Naive thymus-derived CD4-positive, alpha-beta T cell (primary cell): ENCODE measurements at regions of chr1 and their contacts with region 1.

Region 1: DNA sequence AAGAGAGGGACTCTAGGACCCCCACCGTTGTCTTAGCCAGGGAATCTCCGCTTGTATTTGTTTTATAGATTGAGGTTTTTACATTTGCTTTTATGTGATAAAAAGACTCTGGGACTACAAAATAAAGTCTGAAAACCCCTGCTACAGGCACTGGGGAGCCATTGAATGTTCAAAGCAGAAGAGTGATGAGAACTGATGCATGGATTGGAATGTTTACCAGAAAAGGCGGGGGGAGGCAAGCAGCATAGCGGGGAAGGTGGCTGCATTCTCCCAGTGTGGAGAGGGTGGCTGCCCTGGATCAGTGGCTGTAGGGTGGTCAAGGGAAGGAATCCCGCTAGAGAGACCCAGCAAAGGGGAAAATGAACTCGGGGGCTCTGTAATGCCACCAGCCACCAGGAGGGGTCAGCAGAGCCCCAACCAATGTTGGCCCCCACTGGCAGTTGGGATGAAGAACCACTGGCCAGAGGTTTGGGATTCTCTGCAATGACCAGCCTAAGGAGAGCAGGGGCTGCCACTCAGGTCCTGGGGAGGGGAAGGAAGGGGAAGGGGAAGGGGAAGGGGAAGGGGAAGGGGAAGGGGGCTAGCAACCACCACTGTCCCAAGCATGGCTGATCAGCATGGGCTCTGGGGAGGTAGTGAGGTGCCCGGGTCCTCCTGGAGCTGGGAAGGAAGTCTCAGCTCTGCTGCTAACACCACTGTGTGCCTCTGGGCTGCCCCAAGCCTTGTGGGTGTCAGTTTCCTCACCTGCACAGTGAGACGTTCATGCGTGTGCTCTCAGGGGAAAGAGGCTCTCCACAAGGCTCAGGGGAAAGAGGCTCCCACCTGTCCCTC is 19.2 kb upstream of the PEF1 start:
- DNase-seq: peak; percentile 16 to 66 (median 48)
- ATAC-seq: peak; percentile 73
- H3K4me3 ChIP-seq: no peak overlapping the region
- H3K4me3 Mint-ChIP-seq: no peak overlapping the region
- H3K27ac ChIP-seq: no peak overlapping the region
- H3K27ac Mint-ChIP-seq: peak overlapping the region in 1 of 9 donors; percentile 41
- H3K4me1 ChIP-seq: no peaks in the 10 kb centered on the region
- H3K4me1 Mint-ChIP-seq: peaks cover 0 to 2% (median under 1%) of the 10 kb centered on the region in 7 donors
- H3K27me3 ChIP-seq: no peaks in the 10 kb centered on the region
- H3K27me3 Mint-ChIP-seq: peaks cover under 1 to 9% (median 5%) of the 10 kb centered on the region in 5 donors

Region 2: DNA sequence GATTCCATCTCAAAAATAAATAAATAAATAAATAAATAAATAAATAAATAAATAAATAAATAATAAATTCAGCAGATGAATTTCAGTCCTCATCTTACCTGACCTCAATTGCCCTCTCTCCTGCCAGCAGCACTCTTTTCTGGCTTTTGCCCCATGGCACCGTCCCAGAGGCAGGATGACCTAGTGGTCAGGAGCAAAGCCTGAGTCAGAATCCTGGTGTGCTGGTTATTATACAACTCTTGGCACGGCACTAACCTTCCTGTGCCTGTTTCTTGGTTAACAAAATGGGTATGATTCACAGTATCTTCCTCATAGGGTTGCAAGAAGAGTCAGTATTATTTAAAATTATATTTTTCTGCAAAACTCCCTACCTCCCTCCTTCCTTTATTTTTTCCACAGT is 467.2 kb before region 1 on chr1:
- CTCF ChIA-PET with region 1: no interaction called
- POLR2A ChIA-PET with region 1: no interaction called
- intact Hi-C with region 1: no loop called
- DNase-seq: no peak
- ATAC-seq: no peak
- H3K4me3 ChIP-seq: no peak overlapping the region
- H3K4me3 Mint-ChIP-seq: no peak overlapping the region
- H3K27ac ChIP-seq: no peak overlapping the region
- H3K27ac Mint-ChIP-seq: no peak overlapping the region
- H3K4me1 ChIP-seq: no peaks in the 10 kb centered on the region
- H3K4me1 Mint-ChIP-seq: no peaks in the 10 kb centered on the region
- H3K27me3 ChIP-seq: no peaks in the 10 kb centered on the region
- H3K27me3 Mint-ChIP-seq: peaks cover 0 to 13% (median 0%) of the 10 kb centered on the region in 5 donors

Region 3: GRCh38 chr1:31705080-31705866 is 41.4 kb after region 1 on chr1:
- CTCF ChIA-PET with region 1: interaction called, 4 read pairs
- POLR2A ChIA-PET with region 1: no interaction called
- intact Hi-C with region 1: loop called in 1 of 2 experiments (anchors 5 kb)
- DNase-seq: peak in 3 of 9 donors; percentile 13 to 80 (median 21)
- ATAC-seq: peak; percentile 70
- H3K4me3 ChIP-seq: no peak overlapping the region
- H3K4me3 Mint-ChIP-seq: peak overlapping the region in 6 of 10 donors; percentile 30 to 69 (median 57)
- H3K27ac ChIP-seq: no peak overlapping the region
- H3K27ac Mint-ChIP-seq: peak overlapping the region in 2 of 9 donors; percentile 58 to 67
- H3K4me1 ChIP-seq: peaks cover 8 to 12% of the 10 kb centered on the region in 2 donors
- H3K4me1 Mint-ChIP-seq: peaks cover 14 to 42% (median 28%) of the 10 kb centered on the region in 7 donors
- H3K27me3 ChIP-seq: peaks cover 0 to 12% of the 10 kb centered on the region in 2 donors
- H3K27me3 Mint-ChIP-seq: peaks cover 42 to 62% (median 45%) of the 10 kb centered on the region in 5 donors

Region 4: DNA sequence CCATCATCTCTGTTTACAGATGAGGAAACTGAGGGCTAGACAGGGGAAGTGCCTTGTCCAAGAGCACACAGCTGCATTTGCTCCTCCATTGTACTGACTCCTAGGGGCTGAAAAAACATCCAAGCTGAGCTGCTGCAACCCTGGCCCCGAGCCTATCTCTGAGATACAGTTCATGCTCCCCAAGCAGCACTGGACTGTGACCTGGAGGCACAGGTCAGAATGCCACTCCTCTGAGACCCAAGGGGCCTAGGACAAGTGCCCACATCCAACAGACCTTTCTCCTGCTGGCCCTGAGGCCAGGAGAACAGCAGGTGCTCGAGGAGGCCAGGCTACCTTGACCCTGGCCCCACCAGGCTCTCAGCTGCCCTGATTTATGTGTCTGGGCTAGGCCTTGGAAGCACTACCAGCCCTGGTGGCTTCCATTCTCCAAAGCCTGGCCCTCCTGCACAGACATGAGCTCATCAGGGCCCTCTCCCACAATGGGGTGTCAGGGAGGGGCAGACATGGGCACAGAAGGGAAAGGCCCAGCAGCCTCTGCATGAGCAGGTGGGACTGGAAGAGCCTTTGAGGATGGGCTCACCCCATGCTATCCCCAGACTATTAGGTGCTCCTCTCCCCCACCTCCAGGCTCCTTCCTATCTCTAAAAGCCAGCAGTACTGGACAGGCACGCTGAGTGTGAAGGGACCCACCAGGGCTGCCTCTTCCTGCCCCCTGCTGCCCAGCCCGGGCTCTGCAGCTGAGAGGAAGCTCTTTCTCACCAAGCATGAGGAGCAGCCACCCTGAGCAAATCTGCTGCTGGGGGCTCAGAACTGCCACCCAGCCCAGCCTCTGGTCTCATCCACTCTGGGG is 81.5 kb after region 1 on chr1:
- CTCF ChIA-PET with region 1: interaction called, 3 read pairs
- POLR2A ChIA-PET with region 1: no interaction called
- intact Hi-C with region 1: loop called in 1 of 2 experiments (anchors 1 kb)
- DNase-seq: peak in 2 of 9 donors; percentile 30 to 65
- ATAC-seq: peak; percentile 71
- H3K4me3 ChIP-seq: no peak overlapping the region
- H3K4me3 Mint-ChIP-seq: no peak overlapping the region
- H3K27ac ChIP-seq: no peak overlapping the region
- H3K27ac Mint-ChIP-seq: no peak overlapping the region
- H3K4me1 ChIP-seq: peaks cover 0 to 18% of the 10 kb centered on the region in 2 donors
- H3K4me1 Mint-ChIP-seq: peaks cover 0 to 21% (median 8%) of the 10 kb centered on the region in 7 donors
- H3K27me3 ChIP-seq: no peaks in the 10 kb centered on the region
- H3K27me3 Mint-ChIP-seq: peaks cover 0 to 15% (median 6%) of the 10 kb centered on the region in 5 donors

Region 5: GRCh38 chr1:31955917-31956736 is 292.3 kb after region 1 on chr1:
- CTCF ChIA-PET with region 1: no interaction called
- POLR2A ChIA-PET with region 1: no interaction called
- intact Hi-C with region 1: loop called in 1 of 2 experiments (anchors 5 kb)
- DNase-seq: peak in 7 of 9 donors; percentile 31 to 79 (median 51)
- ATAC-seq: peak; percentile 93
- H3K4me3 ChIP-seq: no peak overlapping the region
- H3K4me3 Mint-ChIP-seq: peak overlapping the region; percentile 10 to 79 (median 59)
- H3K27ac ChIP-seq: peak overlapping the region; percentile 8
- H3K27ac Mint-ChIP-seq: peak overlapping the region; percentile 15 to 91 (median 83)
- H3K4me1 ChIP-seq: peaks cover 31 to 42% of the 10 kb centered on the region in 2 donors
- H3K4me1 Mint-ChIP-seq: peaks cover 45 to 76% (median 73%) of the 10 kb centered on the region in 7 donors
- H3K27me3 ChIP-seq: no peaks in the 10 kb centered on the region
- H3K27me3 Mint-ChIP-seq: no peaks in the 10 kb centered on the region

Region 6: DNA sequence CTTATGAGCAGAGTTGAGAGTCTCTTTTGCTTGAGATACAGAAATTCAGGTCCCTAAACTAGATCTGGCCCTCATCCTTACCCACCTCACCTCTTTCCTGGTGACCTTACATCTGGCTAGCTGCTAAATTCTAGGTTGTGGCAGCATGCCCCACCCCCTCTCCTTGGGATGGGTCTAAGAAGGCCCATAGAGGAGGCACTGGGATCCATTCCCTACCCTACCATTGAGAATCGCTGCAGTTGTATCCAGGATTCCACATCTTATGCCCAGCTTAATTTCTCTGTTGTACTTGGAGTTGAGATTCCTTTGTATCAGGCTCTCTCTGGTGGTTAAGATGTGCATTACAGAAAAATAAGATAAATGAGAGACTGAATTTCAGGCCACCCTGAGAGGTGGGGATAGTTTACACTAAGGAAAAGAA is 399.4 kb after region 1 on chr1:
- CTCF ChIA-PET with region 1: interaction called, 3 read pairs
- POLR2A ChIA-PET with region 1: no interaction called
- intact Hi-C with region 1: loop called (anchors 1 to 5 kb)
- DNase-seq: peak in 6 of 9 donors; percentile 12 to 46 (median 35)
- ATAC-seq: peak; percentile 60
- H3K4me3 ChIP-seq: no peak overlapping the region
- H3K4me3 Mint-ChIP-seq: no peak overlapping the region
- H3K27ac ChIP-seq: no peak overlapping the region
- H3K27ac Mint-ChIP-seq: peak overlapping the region in 8 of 9 donors; percentile 8 to 79 (median 68)
- H3K4me1 ChIP-seq: peaks cover 4 to 5% of the 10 kb centered on the region in 2 donors
- H3K4me1 Mint-ChIP-seq: peaks cover 10 to 19% (median 12%) of the 10 kb centered on the region in 7 donors
- H3K27me3 ChIP-seq: no peaks in the 10 kb centered on the region
- H3K27me3 Mint-ChIP-seq: no peaks in the 10 kb centered on the region

Region 7: DNA sequence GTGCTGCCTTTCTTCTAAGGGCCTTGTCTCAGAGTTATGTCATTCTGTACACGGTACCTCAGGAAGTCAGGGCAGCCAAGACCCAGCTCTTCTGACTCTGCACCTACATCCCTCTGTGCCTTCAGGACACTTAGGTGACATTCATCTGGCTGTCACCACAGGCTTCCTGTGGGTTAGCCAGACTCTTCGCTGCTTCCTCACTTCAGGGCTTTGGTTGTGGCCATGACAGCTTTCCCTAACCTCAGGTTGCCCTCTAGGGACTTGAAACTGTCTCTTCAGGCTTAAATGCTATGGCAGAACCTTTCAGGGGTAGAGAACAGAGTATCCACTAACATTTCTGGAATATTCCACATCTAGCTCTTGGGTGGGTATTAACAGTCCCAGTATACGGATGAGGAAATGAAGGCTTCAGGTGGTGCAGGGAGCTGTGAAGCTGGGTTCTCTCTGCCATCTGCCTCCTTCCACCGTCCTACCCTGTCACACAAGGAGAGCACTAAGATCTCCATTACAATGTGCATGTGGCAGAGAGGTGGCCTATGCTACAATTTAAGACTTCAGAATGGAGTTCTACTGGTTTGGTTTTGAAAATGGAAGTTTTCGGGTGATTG is 708.4 kb after region 1 on chr1:
- CTCF ChIA-PET with region 1: no interaction called
- POLR2A ChIA-PET with region 1: no interaction called
- intact Hi-C with region 1: loop called in 1 of 2 experiments (anchors 2 kb)
- DNase-seq: peak; percentile 22 to 78 (median 68)
- ATAC-seq: peak; percentile 88
- H3K4me3 ChIP-seq: no peak overlapping the region
- H3K4me3 Mint-ChIP-seq: peak overlapping the region in 2 of 10 donors; percentile 6 to 9
- H3K27ac ChIP-seq: peak overlapping the region; percentile 20
- H3K27ac Mint-ChIP-seq: peak overlapping the region in 7 of 9 donors; percentile 1 to 75 (median 57)
- H3K4me1 ChIP-seq: peaks cover 12% of the 10 kb centered on the region in 2 donors
- H3K4me1 Mint-ChIP-seq: peaks cover 15 to 22% (median 20%) of the 10 kb centered on the region in 7 donors
- H3K27me3 ChIP-seq: no peaks in the 10 kb centered on the region
- H3K27me3 Mint-ChIP-seq: no peaks in the 10 kb centered on the region

Region 8: GRCh38 chr1:32413507-32414185 is 749.8 kb after region 1 on chr1:
- CTCF ChIA-PET with region 1: no interaction called
- POLR2A ChIA-PET with region 1: no interaction called
- intact Hi-C with region 1: loop called in 1 of 2 experiments (anchors 5 kb)
- DNase-seq: peak; percentile 27 to 78 (median 70)
- ATAC-seq: peak; percentile 90
- H3K4me3 ChIP-seq: no peak overlapping the region
- H3K4me3 Mint-ChIP-seq: no peak overlapping the region
- H3K27ac ChIP-seq: no peak overlapping the region
- H3K27ac Mint-ChIP-seq: peak overlapping the region in 3 of 9 donors; percentile 8 to 26 (median 21)
- H3K4me1 ChIP-seq: no peaks in the 10 kb centered on the region
- H3K4me1 Mint-ChIP-seq: peaks cover 0 to 3% (median 0%) of the 10 kb centered on the region in 7 donors
- H3K27me3 ChIP-seq: peaks cover 0 to 6% of the 10 kb centered on the region in 2 donors
- H3K27me3 Mint-ChIP-seq: peaks cover 4 to 40% (median 8%) of the 10 kb centered on the region in 5 donors